ENCODE measurements at regions of chr12 and their contacts with region 1.

Region 1: GRCh38 chr12:132414634-132415326 is 75.2 kb upstream of the FBRSL1 start:
- DNase-seq: peak; percentile 84 to 92
- H3K4me3 ChIP-seq: no peak overlapping the region
- H3K4me3 Mint-ChIP-seq: no peak overlapping the region
- H3K27ac Mint-ChIP-seq: no peak overlapping the region
- H3K4me1 ChIP-seq: peaks cover 11% of the 10 kb centered on the region
- H3K4me1 Mint-ChIP-seq: no peaks in the 10 kb centered on the region
- H3K27me3 ChIP-seq: no peaks in the 10 kb centered on the region
- H3K27me3 Mint-ChIP-seq: peaks cover 8% of the 10 kb centered on the region
- CTCF ChIP-seq: peak; percentile 89 to 96

Region 2: DNA sequence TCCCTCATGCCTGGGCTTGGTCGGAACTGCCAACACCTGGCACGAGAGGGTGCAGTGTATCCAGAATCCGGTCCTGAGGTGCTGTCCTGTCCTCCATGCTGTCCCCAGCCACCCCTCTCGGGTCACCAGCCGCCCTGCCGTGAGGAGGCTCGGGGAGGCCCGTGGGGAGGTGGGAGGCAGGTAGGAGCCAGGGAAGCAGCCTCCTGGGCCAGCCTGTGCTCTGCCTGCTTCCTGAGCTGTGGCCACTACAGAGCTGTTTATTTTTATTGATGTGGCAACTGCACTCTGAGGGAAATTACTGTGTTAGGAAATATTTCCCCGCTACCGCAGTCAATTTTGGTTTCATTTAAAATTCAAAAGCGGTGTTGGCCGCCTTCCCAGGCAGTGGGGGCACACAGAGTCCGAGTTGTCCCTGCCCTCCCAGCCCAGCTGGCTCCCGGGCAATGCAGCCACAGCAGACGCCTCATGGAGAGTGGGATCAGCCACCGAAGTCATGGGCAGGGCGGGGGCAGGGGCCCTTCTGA is 252.2 kb before region 1 on chr12:
- CTCF ChIA-PET with region 1: interaction called, 11 read pairs
- POLR2A ChIA-PET with region 1: no interaction called
- intact Hi-C with region 1: no loop called
- DNase-seq: no peak
- H3K4me3 ChIP-seq: no peak overlapping the region
- H3K4me3 Mint-ChIP-seq: no peak overlapping the region
- H3K27ac Mint-ChIP-seq: no peak overlapping the region
- H3K4me1 ChIP-seq: no peaks in the 10 kb centered on the region
- H3K4me1 Mint-ChIP-seq: no peaks in the 10 kb centered on the region
- H3K27me3 ChIP-seq: no peaks in the 10 kb centered on the region
- H3K27me3 Mint-ChIP-seq: peaks cover 5% of the 10 kb centered on the region
- CTCF ChIP-seq: no peak

Region 3: DNA sequence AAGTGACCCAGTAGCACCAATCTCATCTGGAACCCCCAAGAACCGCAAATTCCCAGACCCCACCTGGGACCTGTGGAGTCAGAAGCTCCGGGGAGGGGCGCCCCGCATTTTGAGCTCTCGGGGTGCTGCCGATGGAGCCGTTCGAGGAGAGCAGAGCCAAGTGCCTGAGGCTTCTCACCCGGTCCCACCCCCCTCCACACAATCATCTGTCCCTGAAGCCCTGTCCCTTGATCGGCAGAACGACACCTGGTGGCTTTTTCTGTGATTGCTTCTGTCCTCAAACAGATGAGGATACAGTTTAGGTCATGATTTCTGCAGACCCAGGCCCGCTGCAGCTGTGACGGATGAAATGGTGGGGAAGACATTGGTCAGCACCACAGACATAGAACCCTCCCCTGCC is 195.9 kb before region 1 on chr12:
- CTCF ChIA-PET with region 1: interaction called, 3 read pairs
- POLR2A ChIA-PET with region 1: no interaction called
- intact Hi-C with region 1: loop called (anchors 1 kb)
- DNase-seq: peak; percentile 61 to 67
- H3K4me3 ChIP-seq: no peak overlapping the region
- H3K4me3 Mint-ChIP-seq: no peak overlapping the region
- H3K27ac Mint-ChIP-seq: no peak overlapping the region
- H3K4me1 ChIP-seq: peaks cover 4% of the 10 kb centered on the region; the same call in 1 of the 2 replicates
- H3K4me1 Mint-ChIP-seq: peaks cover 5% of the 10 kb centered on the region
- H3K27me3 ChIP-seq: no peaks in the 10 kb centered on the region; the same call in 1 of the 2 replicates
- H3K27me3 Mint-ChIP-seq: peaks cover 23% of the 10 kb centered on the region
- CTCF ChIP-seq: peak; percentile 60 to 79

Region 4: DNA sequence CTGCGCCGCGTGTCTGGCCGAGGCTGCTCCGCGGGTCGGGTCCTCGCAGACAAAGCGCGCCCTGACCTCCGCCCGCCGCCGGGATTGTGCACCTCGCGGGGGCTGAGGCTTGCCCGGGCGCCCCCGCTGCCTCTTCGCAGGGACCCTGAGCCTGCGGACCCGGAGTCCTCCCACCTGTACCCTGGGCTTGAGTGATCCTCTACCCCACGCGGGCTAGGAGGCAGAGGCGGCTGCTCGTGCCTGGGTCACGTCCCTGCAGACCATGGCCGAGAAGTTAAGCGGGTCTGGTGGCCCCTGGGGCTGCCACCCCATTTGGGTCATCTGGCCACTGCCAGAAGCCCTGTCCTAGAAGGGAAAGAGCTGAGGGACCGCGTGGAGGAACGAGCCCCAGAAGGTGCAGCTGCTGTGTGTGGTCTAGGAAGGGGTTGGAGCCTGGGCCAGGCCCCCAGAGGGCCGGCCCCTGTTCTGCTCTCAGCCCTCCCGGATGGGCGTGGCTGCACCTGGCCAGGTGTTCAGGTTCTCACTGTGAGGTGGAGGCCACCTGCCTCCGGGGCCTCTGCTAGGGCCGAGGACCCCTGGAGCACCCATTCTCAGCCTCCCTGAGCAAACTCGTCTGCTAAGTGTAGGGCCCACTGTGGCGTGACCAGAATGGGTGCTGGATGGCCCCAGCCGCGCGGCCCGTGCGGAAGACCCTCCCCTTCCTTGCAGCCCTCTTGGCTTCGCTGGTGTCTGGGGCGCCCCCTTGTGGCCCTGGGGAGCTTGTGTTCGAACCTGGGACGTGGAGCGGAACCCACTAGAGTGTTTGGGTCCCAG is 146.0 kb after region 1 on chr12:
- CTCF ChIA-PET with region 1: interaction called, 28 read pairs
- POLR2A ChIA-PET with region 1: interaction called, 3 read pairs
- intact Hi-C with region 1: loop called (anchors 2 kb)
- DNase-seq: peak; percentile 84 to 88
- H3K4me3 ChIP-seq: peak overlapping the region; percentile 98
- H3K4me3 Mint-ChIP-seq: peak overlapping the region; percentile 80
- H3K27ac Mint-ChIP-seq: peak overlapping the region; percentile 55
- H3K4me1 ChIP-seq: no peaks in the 10 kb centered on the region
- H3K4me1 Mint-ChIP-seq: peaks cover 6% of the 10 kb centered on the region
- H3K27me3 ChIP-seq: no peaks in the 10 kb centered on the region
- H3K27me3 Mint-ChIP-seq: no peaks in the 10 kb centered on the region
- CTCF ChIP-seq: peak; percentile 82 to 93